Psoas muscle (tissue), 8 donors: ENCODE measurements at regions of chr1 and their contacts with region 1.

Region 1: GRCh38 chr1:1343811-1344421 is 5.3 kb downstream of the DVL1 start:
- DNase-seq: peak; percentile 69 to 92
- ATAC-seq: peak; percentile 63 to 78 (median 76)
- H3K4me3 ChIP-seq: peak overlapping the region; percentile 73
- H3K27ac ChIP-seq: peak overlapping the region; percentile 97
- H3K4me1 ChIP-seq: peaks cover 53% of the 10 kb centered on the region
- H3K27me3 ChIP-seq: no peaks in the 10 kb centered on the region
- CTCF ChIP-seq: no peak

Region 2: GRCh38 chr1:1173793-1174415 is 170.0 kb before region 1 on chr1 and contains the start of gene TTLL10:
- intact Hi-C with region 1: no loop called
- DNase-seq: peak; percentile 12 to 53
- ATAC-seq: peak in 1 of 4 donors; percentile 14
- H3K4me3 ChIP-seq: no peak within 1 kb of the TSS
- H3K27ac ChIP-seq: no peak within 1 kb of the TSS
- H3K4me1 ChIP-seq: no peaks in the 10 kb centered on the region
- H3K27me3 ChIP-seq: peaks cover 0 to 81% (median 18%) of the 10 kb centered on the region in 3 donors
- CTCF ChIP-seq: no peak
- total RNA-seq, gene TTLL10: 0.27 TPM in 1 of 4 donors, not detected in the others

Region 3: GRCh38 chr1:1328254-1328653 is 15.7 kb before region 1 on chr1:
- intact Hi-C with region 1: loop called in 1 of 2 experiments (anchors 2 kb)
- DNase-seq: no peak
- ATAC-seq: no peak
- H3K4me3 ChIP-seq: no peak overlapping the region
- H3K27ac ChIP-seq: no peak overlapping the region
- H3K4me1 ChIP-seq: peaks cover 42% of the 10 kb centered on the region
- H3K27me3 ChIP-seq: no peaks in the 10 kb centered on the region
- CTCF ChIP-seq: no peak

Region 4: GRCh38 chr1:1399187-1399871 is 55.4 kb after region 1 on chr1 and contains the start of gene CCNL2:
- intact Hi-C with region 1: no loop called
- DNase-seq: peak; percentile 99 to 100
- ATAC-seq: peak; percentile 94 to 97 (median 95)
- H3K4me3 ChIP-seq: peak within 1 kb of the TSS; percentile 97
- H3K27ac ChIP-seq: peak within 1 kb of the TSS; percentile 95
- H3K4me1 ChIP-seq: peaks cover 46% of the 10 kb centered on the region
- H3K27me3 ChIP-seq: no peaks in the 10 kb centered on the region
- CTCF ChIP-seq: peak; percentile 62
- total RNA-seq, gene CCNL2: 40.2 to 71.8 (median 46.1) TPM

Region 5: GRCh38 chr1:1451696-1452367 is 107.9 kb after region 1 on chr1:
- intact Hi-C with region 1: no loop called
- DNase-seq: no peak
- ATAC-seq: no peak
- H3K4me3 ChIP-seq: no peak overlapping the region
- H3K27ac ChIP-seq: no peak overlapping the region
- H3K4me1 ChIP-seq: no peaks in the 10 kb centered on the region
- H3K27me3 ChIP-seq: no peaks in the 10 kb centered on the region
- CTCF ChIP-seq: no peak